ENCODE measurements at regions of chr17 and their contacts with region 1.

Region 1: GRCh38 chr17:13070732-13071131 is 52.9 kb upstream of the ELAC2 start:
- DNase-seq: no peak
- H3K4me3 ChIP-seq: no peak overlapping the region
- H3K27ac ChIP-seq: no peak overlapping the region
- H3K4me1 ChIP-seq: no peaks in the 10 kb centered on the region
- H3K27me3 ChIP-seq: peaks cover 12% of the 10 kb centered on the region
- CTCF ChIP-seq: no peak

Region 2: GRCh38 chr17:11899537-11899942 is 1171.2 kb before region 1 on chr17:
- CTCF ChIA-PET with region 1: no interaction called
- POLR2A ChIA-PET with region 1: no interaction called
- intact Hi-C with region 1: no loop called
- DNase-seq: peak; percentile 83
- H3K4me3 ChIP-seq: no peak overlapping the region
- H3K27ac ChIP-seq: peak overlapping the region; percentile 17
- H3K4me1 ChIP-seq: no peaks in the 10 kb centered on the region
- H3K27me3 ChIP-seq: no peaks in the 10 kb centered on the region
- CTCF ChIP-seq: peak; percentile 47

Region 3: DNA sequence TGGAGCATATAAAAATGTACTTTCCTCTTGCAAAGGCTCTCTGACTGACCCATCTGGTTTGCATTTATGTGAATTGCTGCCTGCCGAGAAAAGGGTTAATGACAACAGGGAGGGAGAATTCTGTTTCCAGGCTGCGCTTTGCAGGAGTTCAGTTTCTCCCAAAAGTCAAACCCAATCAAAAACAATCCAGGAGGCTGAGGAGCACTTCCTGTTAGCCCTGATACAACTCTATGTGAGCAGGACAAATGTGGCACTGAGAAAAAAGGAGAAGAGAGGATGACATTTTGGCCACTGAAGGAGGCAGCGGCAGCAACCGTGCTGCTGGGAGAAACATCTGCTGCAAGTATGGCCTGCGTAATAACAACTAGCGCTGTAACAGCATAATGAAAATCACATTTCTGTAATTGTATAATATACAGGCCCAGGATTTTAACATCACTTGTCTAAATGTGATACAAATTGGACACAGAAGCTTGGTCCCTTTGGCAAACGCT is 26.1 kb before region 1 on chr17:
- CTCF ChIA-PET with region 1: no interaction called
- POLR2A ChIA-PET with region 1: no interaction called
- intact Hi-C with region 1: loop called (anchors 1 kb)
- DNase-seq: no peak
- H3K4me3 ChIP-seq: no peak overlapping the region
- H3K27ac ChIP-seq: no peak overlapping the region
- H3K4me1 ChIP-seq: no peaks in the 10 kb centered on the region
- H3K27me3 ChIP-seq: peaks cover 71% of the 10 kb centered on the region
- CTCF ChIP-seq: no peak